Activated T-helper 2 cell treated with anti-CD3 and anti-CD28 coated beads, Interferon-gamma antibody, Interleukin-2, Interleukin-4, amounts not matched to agents 10 μg/mL and 5 μg/mL and 100 μg/mL, durations not matched to agents 14 hours and 24 hours and 36 hours (primary cell): ENCODE measurements at regions of chr7 and their contacts with region 1.

Region 1: DNA sequence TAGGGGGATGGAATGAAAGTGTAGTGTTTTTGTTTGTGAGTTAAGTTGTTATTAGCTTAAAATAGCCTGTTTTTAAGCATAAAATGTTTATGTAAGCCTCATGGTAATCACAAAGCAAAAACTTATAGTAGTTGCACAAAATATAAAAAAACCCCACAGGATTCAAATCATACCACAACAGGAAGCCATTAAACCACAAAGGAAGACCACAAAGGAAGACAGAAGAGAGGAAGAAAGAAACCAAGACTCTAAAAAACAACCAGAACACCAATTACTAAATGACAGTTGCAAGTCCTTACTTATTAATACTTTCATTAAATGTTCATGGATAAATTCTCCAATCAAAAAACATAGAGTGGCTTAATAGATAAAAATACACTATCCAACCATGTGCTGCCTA is 63.6 kb downstream of the ANKRD7 start:
- DNase-seq: no peak
- H3K4me3 Mint-ChIP-seq: peak overlapping the region; percentile 0
- H3K27ac Mint-ChIP-seq: peak overlapping the region; percentile 37
- H3K4me1 Mint-ChIP-seq: peaks cover 24% of the 10 kb centered on the region
- H3K27me3 Mint-ChIP-seq: peaks cover 19% of the 10 kb centered on the region

Region 2: GRCh38 chr7:118324790-118325449 is 36.8 kb after region 1 on chr7:
- intact Hi-C with region 1: loop called (anchors 5 kb)
- DNase-seq: no peak
- H3K4me3 Mint-ChIP-seq: no peak overlapping the region
- H3K27ac Mint-ChIP-seq: no peak overlapping the region
- H3K4me1 Mint-ChIP-seq: peaks cover 26% of the 10 kb centered on the region
- H3K27me3 Mint-ChIP-seq: peaks cover 8% of the 10 kb centered on the region